Mammary epithelial cell (primary cell): ENCODE measurements at regions of chr5 and their contacts with region 1.

Region 1: GRCh38 chr5:2017540-2018389 is 135.0 kb upstream of the IRX4 start:
- DNase-seq: no peak
- H3K4me3 ChIP-seq: no peak overlapping the region
- H3K27ac ChIP-seq: no peak overlapping the region
- H3K4me1 ChIP-seq: peaks cover 13% of the 10 kb centered on the region
- H3K27me3 ChIP-seq: no peaks in the 10 kb centered on the region
- CTCF ChIP-seq: peak; percentile 60 to 67

Region 2: GRCh38 chr5:1799602-1800471 is 217.9 kb before region 1 on chr5 and contains the start of gene MRPL36:
- CTCF ChIA-PET with region 1: no interaction called
- dilution Hi-C with region 1: no loop called
- in situ Hi-C with region 1: loop called in 1 of 2 experiments (anchors 25 kb)
- intact Hi-C with region 1: no loop called
- DNase-seq: peak; percentile 87
- H3K4me3 ChIP-seq: peak within 1 kb of the TSS; percentile 69 to 86 (median 74)
- H3K27ac ChIP-seq: peak within 1 kb of the TSS; percentile 59
- H3K4me1 ChIP-seq: peaks cover 20% of the 10 kb centered on the region
- H3K27me3 ChIP-seq: no peaks in the 10 kb centered on the region
- CTCF ChIP-seq: no peak
- total RNA-seq, gene MRPL36: 47.2 to 82.2 TPM

Region 3: GRCh38 chr5:2256691-2257280 is 239.0 kb after region 1 on chr5:
- CTCF ChIA-PET with region 1: no interaction called
- dilution Hi-C with region 1: no loop called
- in situ Hi-C with region 1: no loop called
- intact Hi-C with region 1: no loop called
- DNase-seq: no peak
- H3K4me3 ChIP-seq: no peak overlapping the region
- H3K27ac ChIP-seq: no peak overlapping the region
- H3K4me1 ChIP-seq: no peaks in the 10 kb centered on the region
- H3K27me3 ChIP-seq: no peaks in the 10 kb centered on the region
- CTCF ChIP-seq: no peak